Activated CD4-positive, alpha-beta T cell treated with anti-CD3 and anti-CD28 coated beads for 36 hours (primary cell): ENCODE measurements at regions of chr17 and their contacts with region 1.

Region 1: GRCh38 chr17:19362277-19363113 is at the start of gene B9D1:
- DNase-seq: peak; percentile 95
- ATAC-seq: peak; percentile 92
- H3K4me3 Mint-ChIP-seq: peak within 1 kb of the TSS; percentile 74
- H3K27ac Mint-ChIP-seq: peak within 1 kb of the TSS; percentile 39
- H3K4me1 Mint-ChIP-seq: peaks cover 6% of the 10 kb centered on the region
- H3K27me3 Mint-ChIP-seq: peaks cover 4% of the 10 kb centered on the region
- total RNA-seq, gene B9D1: 7.4 to 7.8 TPM

Region 2: DNA sequence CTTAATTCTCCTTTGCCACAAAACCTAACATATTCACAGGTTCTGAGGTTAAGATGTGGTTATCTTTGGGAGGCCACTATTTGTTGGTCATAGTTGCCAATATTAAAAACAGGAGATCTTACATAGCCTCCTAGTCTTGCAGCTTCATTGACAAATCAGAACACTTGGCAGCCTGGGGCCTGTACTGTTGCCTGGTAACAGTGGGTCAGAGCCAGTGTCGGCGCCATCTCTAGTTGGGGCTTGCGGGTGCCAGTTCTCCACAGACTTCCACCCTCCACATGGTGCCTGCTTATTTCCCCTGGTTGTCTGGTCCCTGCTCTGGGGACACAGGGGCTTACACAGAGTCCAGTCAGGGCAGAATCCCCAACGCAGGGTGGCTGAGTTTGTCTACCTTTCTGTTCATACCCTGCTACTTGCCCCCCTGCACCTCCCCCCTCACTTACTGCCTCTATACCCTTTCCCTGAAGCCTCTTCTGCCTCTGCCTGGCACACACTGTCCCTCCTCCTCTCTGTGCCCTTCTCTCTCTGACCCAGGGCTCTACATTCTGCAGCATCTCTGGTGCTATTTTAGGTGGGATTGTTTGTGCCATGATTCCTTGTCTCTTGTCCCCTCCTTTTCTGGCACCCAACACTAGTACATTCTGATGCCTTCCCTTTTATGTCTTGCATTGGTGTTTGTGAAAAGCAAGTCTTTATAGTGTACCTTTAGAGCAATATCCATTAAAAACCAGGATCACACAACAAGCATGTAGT is 111.9 kb before region 1 on chr17:
- CTCF ChIA-PET with region 1: no interaction called
- POLR2A ChIA-PET with region 1: no interaction called
- intact Hi-C with region 1: no loop called
- DNase-seq: no peak
- ATAC-seq: no peak
- H3K4me3 Mint-ChIP-seq: no peak overlapping the region
- H3K27ac Mint-ChIP-seq: no peak overlapping the region
- H3K4me1 Mint-ChIP-seq: no peaks in the 10 kb centered on the region
- H3K27me3 Mint-ChIP-seq: peaks cover 11% of the 10 kb centered on the region

Region 3: GRCh38 chr17:19433727-19434340 is 71.3 kb after region 1 on chr17:
- CTCF ChIA-PET with region 1: interaction called, 13 read pairs
- POLR2A ChIA-PET with region 1: no interaction called
- intact Hi-C with region 1: no loop called
- DNase-seq: no peak
- ATAC-seq: no peak
- H3K4me3 Mint-ChIP-seq: no peak overlapping the region
- H3K27ac Mint-ChIP-seq: no peak overlapping the region
- H3K4me1 Mint-ChIP-seq: no peaks in the 10 kb centered on the region
- H3K27me3 Mint-ChIP-seq: no peaks in the 10 kb centered on the region

Region 4: DNA sequence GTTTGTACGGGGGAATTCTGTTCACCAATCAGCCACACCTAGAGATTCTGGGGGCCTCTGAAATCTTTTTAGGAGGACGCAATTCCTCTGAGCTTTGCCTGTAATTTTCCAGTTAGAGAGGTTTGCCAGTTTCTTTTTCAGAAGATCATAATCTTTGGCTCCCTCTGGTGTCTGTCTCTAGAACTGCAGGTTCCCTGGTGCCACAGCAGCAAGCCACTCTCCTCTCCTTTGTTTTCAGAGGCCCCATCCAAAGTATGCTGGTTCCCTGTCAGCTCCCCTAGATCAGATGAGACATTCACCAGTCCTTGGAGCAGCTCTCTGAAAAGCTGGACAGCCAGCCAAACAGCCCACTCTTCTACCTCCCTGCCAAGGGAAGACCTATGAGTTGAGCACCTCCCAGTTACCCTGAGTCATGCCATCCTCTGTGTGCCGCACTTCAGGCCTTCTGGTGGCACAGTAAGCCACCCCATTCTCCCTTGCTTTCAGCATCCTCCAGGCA is 84.6 kb after region 1 on chr17:
- CTCF ChIA-PET with region 1: interaction called, 51 read pairs
- POLR2A ChIA-PET with region 1: interaction called, 3 read pairs
- intact Hi-C with region 1: loop called (anchors 1 kb)
- DNase-seq: peak; percentile 76
- ATAC-seq: peak; percentile 49
- H3K4me3 Mint-ChIP-seq: no peak overlapping the region
- H3K27ac Mint-ChIP-seq: no peak overlapping the region
- H3K4me1 Mint-ChIP-seq: peaks cover 3% of the 10 kb centered on the region
- H3K27me3 Mint-ChIP-seq: peaks cover 9% of the 10 kb centered on the region

Region 5: DNA sequence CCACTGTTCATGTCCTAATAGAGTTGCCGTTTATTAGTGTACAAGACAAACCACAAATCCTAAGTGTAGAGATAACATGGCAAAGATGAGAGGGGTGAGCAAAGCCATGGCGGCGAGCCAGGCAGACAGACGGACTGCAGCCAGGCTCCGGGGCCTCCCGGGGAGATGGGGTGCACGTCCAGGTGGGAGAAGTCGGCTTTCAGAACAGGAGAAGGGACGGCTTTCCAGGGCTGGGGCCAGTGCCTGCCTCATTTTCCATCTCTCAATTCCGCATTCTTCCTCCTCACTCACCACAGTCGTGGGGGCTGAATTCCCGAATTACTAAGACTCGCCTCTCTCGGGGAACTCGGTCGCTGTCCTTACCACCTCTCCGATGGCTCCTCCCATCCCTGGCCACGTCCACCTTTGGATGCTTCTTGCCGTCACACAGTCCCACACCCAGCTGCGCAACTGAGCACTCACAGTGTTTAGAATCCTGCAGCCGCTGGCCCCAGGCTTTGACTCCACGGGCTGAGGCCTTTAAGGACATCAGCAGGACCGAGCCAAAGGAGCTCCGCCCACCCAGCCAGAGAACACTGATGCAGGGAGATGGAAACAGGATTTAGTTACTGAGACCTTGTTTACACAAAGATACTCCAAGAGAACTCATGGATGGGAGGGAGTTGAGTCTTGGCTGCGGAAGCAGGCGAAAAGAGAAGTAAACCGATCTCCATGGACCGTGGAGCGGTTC is 108.2 kb after region 1 on chr17:
- CTCF ChIA-PET with region 1: no interaction called
- POLR2A ChIA-PET with region 1: no interaction called
- intact Hi-C with region 1: loop called in 1 of 2 experiments (anchors 1 kb)
- DNase-seq: no peak
- ATAC-seq: no peak
- H3K4me3 Mint-ChIP-seq: no peak overlapping the region
- H3K27ac Mint-ChIP-seq: no peak overlapping the region
- H3K4me1 Mint-ChIP-seq: no peaks in the 10 kb centered on the region
- H3K27me3 Mint-ChIP-seq: peaks cover 2% of the 10 kb centered on the region

Region 6: DNA sequence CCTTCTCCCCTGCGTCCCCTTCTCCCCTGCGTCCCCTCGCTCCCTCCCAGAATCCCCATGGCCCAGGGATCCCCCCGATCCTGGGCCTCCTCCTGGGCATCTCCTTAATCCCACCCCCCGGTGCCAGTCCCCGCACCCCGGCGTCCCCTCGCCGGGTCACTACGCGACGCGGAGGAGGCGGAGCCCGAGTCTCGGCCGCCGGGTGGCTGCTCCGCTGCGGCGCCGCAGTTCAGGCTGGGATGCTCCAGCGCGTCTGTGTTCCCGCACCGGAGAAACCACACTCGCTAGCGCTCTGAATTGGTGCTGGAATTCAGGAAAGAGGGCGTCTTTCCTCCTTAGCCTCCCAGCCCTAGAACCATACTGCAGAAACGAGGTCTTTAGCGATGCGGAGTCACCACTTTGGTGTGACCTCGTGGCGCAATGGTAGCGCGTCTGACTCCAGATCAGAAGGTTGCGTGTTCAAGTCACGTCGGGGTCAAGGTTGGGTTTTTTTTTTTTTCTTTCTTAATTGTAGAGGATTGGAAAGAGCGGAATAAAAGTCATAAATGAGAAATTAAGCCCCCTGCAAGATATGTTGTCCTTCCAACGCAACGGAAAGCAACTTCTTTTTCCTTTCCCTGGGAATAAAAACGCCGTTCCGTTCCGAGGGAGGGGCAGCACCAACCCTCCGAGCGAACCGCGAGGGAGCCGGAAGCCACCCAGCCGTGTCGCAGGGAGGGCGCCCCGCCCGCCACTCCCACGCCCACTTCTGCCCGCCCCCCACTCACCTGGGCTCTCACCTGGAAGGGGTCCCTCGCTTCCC is 145.5 kb after region 1 on chr17:
- CTCF ChIA-PET with region 1: interaction called, 3 read pairs
- POLR2A ChIA-PET with region 1: no interaction called
- intact Hi-C with region 1: loop called (anchors 1 kb)
- DNase-seq: peak; percentile 87
- ATAC-seq: peak; percentile 85
- H3K4me3 Mint-ChIP-seq: peak overlapping the region; percentile 82
- H3K27ac Mint-ChIP-seq: peak overlapping the region; percentile 89
- H3K4me1 Mint-ChIP-seq: peaks cover 7% of the 10 kb centered on the region
- H3K27me3 Mint-ChIP-seq: peaks cover 2% of the 10 kb centered on the region

Region 7: GRCh38 chr17:19648475-19649406 is 286.2 kb after region 1 on chr17 and contains the start of gene ALDH3A2:
- CTCF ChIA-PET with region 1: no interaction called
- POLR2A ChIA-PET with region 1: no interaction called
- intact Hi-C with region 1: loop called in 1 of 2 experiments (anchors 1 kb)
- DNase-seq: peak; percentile 97
- ATAC-seq: peak; percentile 94
- H3K4me3 Mint-ChIP-seq: peak within 1 kb of the TSS; percentile 79
- H3K27ac Mint-ChIP-seq: peak within 1 kb of the TSS; percentile 87
- H3K4me1 Mint-ChIP-seq: peaks cover 38% of the 10 kb centered on the region
- H3K27me3 Mint-ChIP-seq: peaks cover 1% of the 10 kb centered on the region
- total RNA-seq, gene ALDH3A2: 18.5 to 23.9 TPM

Region 8: DNA sequence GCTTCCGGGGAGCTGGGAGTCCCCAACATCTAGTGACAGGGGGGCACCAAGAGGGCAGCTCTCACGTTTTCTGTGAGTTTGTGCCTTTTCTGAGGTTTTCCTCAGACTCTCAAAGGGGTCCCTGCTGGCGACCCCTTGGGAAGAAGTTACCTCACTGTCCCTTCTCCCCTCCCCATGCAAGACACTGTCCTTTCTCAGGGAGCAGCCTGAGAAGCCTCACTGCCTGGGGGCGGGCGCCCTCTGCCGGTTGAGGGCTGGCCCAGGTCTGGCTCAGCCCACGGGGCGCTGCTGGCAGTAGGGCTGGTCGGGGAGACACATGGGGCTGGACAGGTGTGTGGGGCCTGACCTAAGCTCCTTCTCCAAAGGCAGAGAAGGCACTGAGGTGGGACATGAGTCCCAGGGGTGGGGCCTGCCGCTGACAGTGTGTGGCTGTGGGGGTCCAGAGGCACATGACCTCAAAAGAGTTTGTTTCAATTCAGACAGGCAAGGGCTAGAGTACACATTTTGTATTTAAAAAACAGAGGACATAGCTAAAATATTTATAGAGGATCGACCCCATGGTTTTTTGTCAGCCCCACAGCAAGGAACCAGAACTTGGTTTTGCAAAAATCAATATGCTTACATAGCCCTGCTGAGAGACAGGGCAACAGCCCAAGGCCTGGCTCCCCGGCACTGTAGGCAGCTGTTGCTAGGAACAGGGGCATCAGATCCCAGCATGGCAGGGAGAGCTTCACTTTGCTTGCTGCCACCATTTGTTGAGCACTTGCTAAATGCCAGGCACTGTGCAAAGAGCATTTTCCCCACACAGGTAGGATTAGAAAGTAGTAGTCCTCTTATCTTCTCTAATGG is 404.2 kb after region 1 on chr17:
- CTCF ChIA-PET with region 1: interaction called, 9 read pairs
- POLR2A ChIA-PET with region 1: no interaction called
- intact Hi-C with region 1: loop called (anchors 2 to 5 kb)
- DNase-seq: peak; percentile 89
- ATAC-seq: peak; percentile 80
- H3K4me3 Mint-ChIP-seq: no peak overlapping the region
- H3K27ac Mint-ChIP-seq: peak overlapping the region; percentile 72
- H3K4me1 Mint-ChIP-seq: peaks cover 46% of the 10 kb centered on the region
- H3K27me3 Mint-ChIP-seq: no peaks in the 10 kb centered on the region